H1 (cell line): ENCODE measurements at regions of chrX and their contacts with region 1.

Region 1: DNA sequence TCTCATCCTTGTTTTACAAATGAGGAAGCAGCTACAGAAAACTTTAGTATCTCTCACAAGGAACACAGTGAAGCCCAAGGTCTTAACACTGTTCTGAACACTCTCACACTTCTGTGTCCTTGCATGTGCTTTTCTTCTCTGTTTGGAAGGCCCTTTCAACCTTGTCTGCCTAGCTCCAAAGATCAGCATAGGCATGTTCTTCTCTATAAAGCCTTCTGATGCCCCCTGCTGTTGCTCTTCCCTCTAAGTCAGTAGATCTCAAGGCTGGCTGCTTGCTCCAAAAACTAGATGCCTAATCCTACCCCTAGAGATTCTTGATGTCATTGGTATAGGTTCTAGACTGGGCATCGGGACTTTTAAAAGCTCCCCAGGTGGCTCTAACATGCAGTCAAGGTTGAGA is 5.9 kb downstream of the APOO start:
- DNase-seq: no peak
- H3K4me3 ChIP-seq: no peak overlapping the region
- H3K27ac ChIP-seq: no peak overlapping the region
- H3K4me1 ChIP-seq: peaks cover 2 to 11% (median 3%) of the 10 kb centered on the region in 4 experiments; a peak in 3 of 7 replicates
- H3K27me3 ChIP-seq: no peaks in the 10 kb centered on the region
- CTCF ChIP-seq: peak in 2 of 3 experiments; percentile 19 to 23; a peak in 2 of 4 replicates
- EP300 ChIP-seq: no peak
- POLR2A ChIP-seq: no peak
- RAD21 ChIP-seq: peak; percentile 43 to 51

Region 2: GRCh38 chrX:23694606-23695005 is 207.2 kb before region 1 on chrX:
- CTCF ChIA-PET with region 1: interaction called, 33 read pairs
- POLR2A ChIA-PET with region 1: interaction called, 3 read pairs
- DNase-seq: no peak
- H3K4me3 ChIP-seq: no peak overlapping the region
- H3K27ac ChIP-seq: no peak overlapping the region
- H3K4me1 ChIP-seq: no peaks in the 10 kb centered on the region
- H3K27me3 ChIP-seq: no peaks in the 10 kb centered on the region
- CTCF ChIP-seq: peak; percentile 7 to 35 (median 24); a peak in 3 of 4 replicates
- EP300 ChIP-seq: no peak
- POLR2A ChIP-seq: no peak
- RAD21 ChIP-seq: peak; percentile 54 to 65

Region 3: GRCh38 chrX:23699636-23700194 is 202.1 kb before region 1 on chrX:
- CTCF ChIA-PET with region 1: interaction called, 33 read pairs
- POLR2A ChIA-PET with region 1: interaction called, 3 read pairs
- DNase-seq: peak in 1 of 2 experiments; percentile 45
- H3K4me3 ChIP-seq: no peak overlapping the region
- H3K27ac ChIP-seq: no peak overlapping the region
- H3K4me1 ChIP-seq: no peaks in the 10 kb centered on the region
- H3K27me3 ChIP-seq: no peaks in the 10 kb centered on the region
- CTCF ChIP-seq: no peak
- EP300 ChIP-seq: no peak
- POLR2A ChIP-seq: no peak
- RAD21 ChIP-seq: no peak

Region 4: GRCh38 chrX:23742697-23743622 is 158.8 kb before region 1 on chrX and contains the start of gene ACOT9:
- CTCF ChIA-PET with region 1: interaction called, 16 read pairs
- POLR2A ChIA-PET with region 1: interaction called, 13 read pairs
- DNase-seq: peak; percentile 56 to 82
- H3K4me3 ChIP-seq: peak within 1 kb of the TSS; percentile 62 to 83 (median 71)
- H3K27ac ChIP-seq: peak within 1 kb of the TSS; percentile 62
- H3K4me1 ChIP-seq: no peaks in the 10 kb centered on the region
- H3K27me3 ChIP-seq: no peaks in the 10 kb centered on the region
- CTCF ChIP-seq: no peak
- EP300 ChIP-seq: no peak
- POLR2A ChIP-seq: peak in 1 of 2 experiments; percentile 59; a peak in 1 of 3 replicates
- RAD21 ChIP-seq: no peak
- total RNA-seq, gene ACOT9: 37.4 and 39.5 TPM in 2 replicates

Region 5: DNA sequence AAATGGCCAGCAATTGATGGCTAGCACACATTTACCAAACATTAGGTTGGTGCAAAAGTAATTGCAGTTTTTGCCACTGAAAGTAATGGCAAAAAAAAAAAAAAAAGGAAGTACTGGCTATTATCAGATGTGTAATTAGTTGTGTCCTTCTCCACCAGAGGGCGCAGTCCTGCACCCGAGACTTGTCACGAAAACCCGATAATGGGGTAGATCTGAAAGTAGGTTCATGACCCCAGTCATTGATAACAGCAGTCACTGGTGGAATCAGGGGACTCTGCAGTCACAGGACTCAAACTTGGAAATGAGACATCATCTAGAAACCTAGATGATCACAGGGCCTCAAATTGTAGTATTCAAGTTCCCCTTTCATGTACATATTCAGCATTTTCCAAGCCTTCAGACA is 145.6 kb before region 1 on chrX:
- CTCF ChIA-PET with region 1: interaction called, 27 read pairs
- POLR2A ChIA-PET with region 1: interaction called, 5 read pairs
- DNase-seq: peak in 1 of 2 experiments; percentile 61
- H3K4me3 ChIP-seq: no peak overlapping the region
- H3K27ac ChIP-seq: no peak overlapping the region
- H3K4me1 ChIP-seq: no peaks in the 10 kb centered on the region
- H3K27me3 ChIP-seq: no peaks in the 10 kb centered on the region
- CTCF ChIP-seq: peak; percentile 18 to 56 (median 54)
- EP300 ChIP-seq: no peak
- POLR2A ChIP-seq: no peak
- RAD21 ChIP-seq: peak; percentile 24 to 56; a peak in 3 of 4 replicates

Region 6: GRCh38 chrX:23782863-23783568 is 118.8 kb before region 1 on chrX and contains the start of gene SAT1:
- CTCF ChIA-PET with region 1: interaction called, 20 read pairs
- POLR2A ChIA-PET with region 1: interaction called, 11 read pairs
- DNase-seq: peak; percentile 69 to 92
- H3K4me3 ChIP-seq: peak within 1 kb of the TSS; percentile 65 to 88 (median 72)
- H3K27ac ChIP-seq: no peak within 1 kb of the TSS
- H3K4me1 ChIP-seq: no peaks in the 10 kb centered on the region
- H3K27me3 ChIP-seq: no peaks in the 10 kb centered on the region
- CTCF ChIP-seq: peak; percentile 55 to 69 (median 55)
- EP300 ChIP-seq: 0 out of 3 replicates have a peak, but pooled peaks of 1 of the 2 experiments have one; percentile 32
- POLR2A ChIP-seq: peak; percentile 95 to 96
- RAD21 ChIP-seq: peak; percentile 52 to 68
- total RNA-seq, gene SAT1: 26.3 and 29.2 TPM in 2 replicates

Region 7: GRCh38 chrX:23888887-23889501 is 12.8 kb before region 1 on chrX:
- CTCF ChIA-PET with region 1: interaction called, 10 read pairs
- POLR2A ChIA-PET with region 1: interaction called, 3 read pairs
- DNase-seq: no peak
- H3K4me3 ChIP-seq: no peak overlapping the region
- H3K27ac ChIP-seq: no peak overlapping the region
- H3K4me1 ChIP-seq: peaks cover 0 to 3% (median 0%) of the 10 kb centered on the region in 4 experiments; a peak in 1 of 7 replicates
- H3K27me3 ChIP-seq: no peaks in the 10 kb centered on the region
- CTCF ChIP-seq: no peak
- EP300 ChIP-seq: no peak
- POLR2A ChIP-seq: no peak
- RAD21 ChIP-seq: no peak